CD4-positive, alpha-beta T cell (primary cell): ENCODE measurements at regions of chr2 and their contacts with region 1.

Region 1: GRCh38 chr2:20650880-20651730 is at the start of gene HS1BP3:
- DNase-seq: peak; percentile 77 to 97 (median 87)
- ATAC-seq: peak; percentile 90
- H3K4me3 ChIP-seq: peak within 1 kb of the TSS; percentile 96
- H3K4me3 Mint-ChIP-seq: peak within 1 kb of the TSS; percentile 94
- H3K27ac ChIP-seq: peak within 1 kb of the TSS; percentile 82 to 92
- H3K27ac Mint-ChIP-seq: peak within 1 kb of the TSS; percentile 89
- H3K4me1 ChIP-seq: peaks cover 28% of the 10 kb centered on the region
- H3K4me1 Mint-ChIP-seq: peaks cover 37% of the 10 kb centered on the region
- H3K27me3 ChIP-seq: no peaks in the 10 kb centered on the region
- H3K27me3 Mint-ChIP-seq: no peaks in the 10 kb centered on the region
- CTCF ChIP-seq: peak; percentile 69
- total RNA-seq, gene HS1BP3: 8.8 to 10.1 TPM

Region 2: DNA sequence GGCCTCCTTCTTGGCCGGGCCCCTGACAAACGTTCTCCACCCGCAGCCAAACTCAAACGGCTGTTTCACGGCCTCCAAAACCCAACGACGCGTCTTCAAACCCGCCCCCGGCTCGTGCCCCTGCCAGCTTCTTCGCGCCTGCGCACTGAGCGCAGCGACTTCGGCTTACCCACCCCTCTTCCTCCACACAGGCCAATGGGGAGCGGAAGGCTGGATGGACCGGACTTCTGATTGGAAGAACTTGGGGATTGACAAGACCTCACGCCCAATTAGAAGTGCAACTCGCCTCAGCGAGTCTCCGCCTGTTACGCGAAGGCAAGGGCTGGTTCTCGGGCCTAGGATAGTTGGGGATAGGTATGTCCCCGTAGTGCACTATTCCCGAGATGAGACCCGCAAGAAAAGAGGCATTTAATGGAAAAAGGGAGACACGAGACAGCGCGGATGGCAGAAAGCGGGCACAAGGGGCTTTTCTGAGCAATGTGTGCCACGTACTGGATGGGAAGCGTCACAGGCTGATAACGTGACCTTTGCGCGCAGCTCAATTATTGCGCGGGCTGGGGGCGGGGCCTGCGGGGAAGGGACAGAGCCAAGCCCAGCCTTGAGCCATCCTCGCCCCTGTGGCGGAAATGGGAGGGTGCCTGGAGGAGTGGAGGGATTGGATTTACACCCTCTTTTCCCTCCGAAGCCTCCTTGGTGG is 599.4 kb before region 1 on chr2 and contains the start of gene LAPTM4A:
- CTCF ChIA-PET with region 1: no interaction called
- POLR2A ChIA-PET with region 1: interaction called, 4 read pairs
- intact Hi-C with region 1: loop called in 1 of 2 experiments (anchors 5 kb)
- DNase-seq: peak; percentile 93 to 100 (median 96)
- ATAC-seq: peak; percentile 90
- H3K4me3 ChIP-seq: peak within 1 kb of the TSS; percentile 87
- H3K4me3 Mint-ChIP-seq: no peak within 1 kb of the TSS
- H3K27ac ChIP-seq: peak within 1 kb of the TSS; percentile 94 to 99
- H3K27ac Mint-ChIP-seq: no peak within 1 kb of the TSS
- H3K4me1 ChIP-seq: peaks cover 28% of the 10 kb centered on the region
- H3K4me1 Mint-ChIP-seq: peaks cover 29% of the 10 kb centered on the region
- H3K27me3 ChIP-seq: peaks cover 6 to 9% of the 10 kb centered on the region in 2 experiments
- H3K27me3 Mint-ChIP-seq: peaks cover 25% of the 10 kb centered on the region
- CTCF ChIP-seq: no peak
- total RNA-seq, gene LAPTM4A: 59.4 to 62.0 TPM

Region 3: GRCh38 chr2:20446917-20447436 is 204.1 kb before region 1 on chr2 and contains the start of gene RHOB:
- CTCF ChIA-PET with region 1: interaction called, 10 read pairs
- POLR2A ChIA-PET with region 1: interaction called, 30 read pairs
- intact Hi-C with region 1: loop called in 1 of 2 experiments (anchors 2 kb)
- DNase-seq: peak; percentile 62 to 97 (median 81)
- ATAC-seq: peak; percentile 96
- H3K4me3 ChIP-seq: peak within 1 kb of the TSS; percentile 65
- H3K4me3 Mint-ChIP-seq: peak within 1 kb of the TSS; percentile 86
- H3K27ac ChIP-seq: no peak within 1 kb of the TSS
- H3K27ac Mint-ChIP-seq: no peak within 1 kb of the TSS
- H3K4me1 ChIP-seq: peaks cover 16% of the 10 kb centered on the region
- H3K4me1 Mint-ChIP-seq: no peaks in the 10 kb centered on the region
- H3K27me3 ChIP-seq: peaks cover 10 to 22% of the 10 kb centered on the region in 2 experiments
- H3K27me3 Mint-ChIP-seq: peaks cover 31% of the 10 kb centered on the region
- CTCF ChIP-seq: no peak
- total RNA-seq, gene RHOB: 25.9 to 26.6 TPM

Region 4: DNA sequence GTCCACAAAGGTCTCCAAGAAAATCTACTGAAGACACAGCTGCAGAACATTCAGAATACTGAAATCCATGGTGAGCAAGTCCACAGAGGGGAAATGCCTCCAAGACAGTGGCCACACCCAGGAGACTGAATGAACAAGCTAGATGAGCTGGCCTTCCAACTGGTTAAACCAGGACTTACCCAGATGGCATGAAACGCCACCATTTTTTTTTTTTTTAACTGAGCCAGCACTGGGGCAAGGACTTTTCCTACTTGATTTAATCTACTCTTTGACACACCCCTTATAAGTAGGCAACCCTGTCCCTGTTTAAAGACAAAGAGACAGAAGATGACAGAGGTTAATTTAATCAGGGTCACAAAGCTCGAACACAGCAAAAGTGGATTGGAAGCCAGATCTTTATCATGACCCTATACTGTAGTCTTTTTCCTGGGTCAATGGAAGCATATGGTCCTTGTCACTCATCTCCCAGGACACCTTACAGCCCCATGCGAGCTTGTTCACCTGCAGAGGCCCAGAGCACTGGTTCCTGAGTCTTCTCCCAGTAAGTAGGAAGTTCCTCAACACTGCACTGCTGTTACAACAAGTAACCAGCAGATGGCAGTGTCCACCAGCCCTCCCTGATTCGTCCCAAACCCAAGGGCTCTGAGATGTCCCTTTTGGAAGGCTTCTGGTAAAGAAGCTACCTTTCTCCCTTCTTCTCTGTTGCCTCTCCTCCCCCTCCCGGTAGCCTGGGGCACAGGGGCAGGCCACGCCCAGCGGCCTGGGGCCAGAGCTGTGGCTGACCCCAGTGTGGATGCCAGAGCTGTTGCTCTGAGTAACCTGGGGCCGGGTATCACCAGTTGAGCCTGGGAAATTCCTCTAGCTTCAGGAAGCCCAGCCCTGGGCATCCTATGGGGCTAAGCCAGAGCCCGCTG is 10.2 kb after region 1 on chr2:
- CTCF ChIA-PET with region 1: interaction called, 52 read pairs
- POLR2A ChIA-PET with region 1: interaction called, 8 read pairs
- intact Hi-C with region 1: no loop called
- DNase-seq: peak; percentile 43 to 85 (median 56)
- ATAC-seq: peak; percentile 84
- H3K4me3 ChIP-seq: no peak overlapping the region
- H3K4me3 Mint-ChIP-seq: no peak overlapping the region
- H3K27ac ChIP-seq: no peak overlapping the region
- H3K27ac Mint-ChIP-seq: no peak overlapping the region
- H3K4me1 ChIP-seq: peaks cover 18% of the 10 kb centered on the region
- H3K4me1 Mint-ChIP-seq: peaks cover 13% of the 10 kb centered on the region
- H3K27me3 ChIP-seq: peaks cover 46 to 62% of the 10 kb centered on the region in 2 experiments
- H3K27me3 Mint-ChIP-seq: peaks cover 78% of the 10 kb centered on the region
- CTCF ChIP-seq: peak; percentile 93

Region 5: GRCh38 chr2:20822535-20823490 is 171.7 kb after region 1 on chr2 and contains the start of gene LDAH:
- CTCF ChIA-PET with region 1: interaction called, 7 read pairs
- POLR2A ChIA-PET with region 1: interaction called, 16 read pairs
- intact Hi-C with region 1: loop called in 1 of 2 experiments (anchors 2 kb)
- DNase-seq: peak; percentile 69 to 90 (median 75)
- ATAC-seq: peak; percentile 82
- H3K4me3 ChIP-seq: peak within 1 kb of the TSS; percentile 94
- H3K4me3 Mint-ChIP-seq: peak within 1 kb of the TSS; percentile 94
- H3K27ac ChIP-seq: peak within 1 kb of the TSS; percentile 86 to 98
- H3K27ac Mint-ChIP-seq: peak within 1 kb of the TSS; percentile 99
- H3K4me1 ChIP-seq: peaks cover 9% of the 10 kb centered on the region
- H3K4me1 Mint-ChIP-seq: peaks cover 42% of the 10 kb centered on the region
- H3K27me3 ChIP-seq: no peaks in the 10 kb centered on the region
- H3K27me3 Mint-ChIP-seq: no peaks in the 10 kb centered on the region
- CTCF ChIP-seq: no peak
- total RNA-seq, gene LDAH: 6.5 to 7.2 TPM